Stomach (tissue), 19 donors: ENCODE measurements at regions of chr1 and their contacts with region 1.

Region 1: DNA sequence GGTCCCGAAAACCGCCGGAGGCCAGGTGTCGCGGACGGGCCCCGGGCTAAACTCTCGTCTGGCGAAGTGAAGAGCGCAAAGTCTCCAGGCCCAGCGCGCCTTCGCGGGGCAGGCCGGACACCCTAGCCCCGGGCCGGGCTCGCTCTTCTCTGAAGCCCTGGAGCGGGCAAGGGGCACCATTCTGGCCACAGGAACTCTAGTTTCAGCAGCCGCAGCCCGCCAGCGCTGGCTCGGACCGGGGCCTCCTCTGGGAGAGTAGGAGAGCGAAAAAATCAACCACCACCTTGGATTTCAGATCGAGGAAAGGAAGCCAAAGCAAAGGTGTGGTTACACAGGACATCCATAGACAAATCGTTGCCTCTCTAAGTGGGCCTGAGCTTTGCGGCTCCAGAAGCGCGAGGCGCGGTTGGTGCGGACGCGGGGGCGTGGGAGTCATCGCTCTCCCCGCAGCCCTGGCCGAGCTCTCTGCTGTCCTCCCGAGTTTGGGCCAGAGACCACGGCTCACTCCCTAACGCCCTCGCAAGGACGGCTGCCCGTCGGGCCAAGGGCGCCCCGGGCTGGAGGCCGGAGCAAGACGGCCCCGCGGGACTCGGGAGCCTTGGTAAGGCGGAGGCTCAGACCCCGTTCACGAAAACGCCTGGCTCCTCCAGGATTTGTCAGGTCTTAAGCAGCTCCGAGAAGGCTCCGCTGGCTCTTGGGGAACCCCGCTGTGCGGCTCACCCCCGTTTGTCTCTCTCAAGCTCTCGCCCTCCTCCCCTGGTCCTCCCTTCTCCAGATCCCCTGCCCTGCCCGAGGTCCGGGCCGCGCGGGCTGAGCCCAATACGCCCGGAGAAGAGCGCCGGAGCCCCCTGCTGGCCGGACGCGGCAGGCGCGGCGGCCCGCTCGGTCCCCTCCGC is 132.9 kb upstream of the DPYD start:
- DNase-seq: peak; percentile 55 to 88
- H3K4me3 ChIP-seq: peak overlapping the region; percentile 41 to 68 (median 55)
- H3K27ac ChIP-seq: no peak overlapping the region
- H3K4me1 ChIP-seq: peaks cover 8 to 22% (median 17%) of the 10 kb centered on the region in 4 donors
- H3K27me3 ChIP-seq: peaks cover 7 to 80% (median 29%) of the 10 kb centered on the region in 3 donors
- CTCF ChIP-seq: peak in 5 of 7 experiments; percentile 25 to 93 (median 90)
- EP300 ChIP-seq: no peak
- POLR2A ChIP-seq: no peak

Region 2: GRCh38 chr1:96966536-96967138 is 1087.1 kb before region 1 on chr1:
- intact Hi-C with region 1: loop called (anchors 10 kb)
- DNase-seq: peak; percentile 78 to 89
- H3K4me3 ChIP-seq: no peak overlapping the region
- H3K27ac ChIP-seq: no peak overlapping the region
- H3K4me1 ChIP-seq: peaks cover 0 to 16% (median 8%) of the 10 kb centered on the region in 4 donors
- H3K27me3 ChIP-seq: no peaks in the 10 kb centered on the region
- CTCF ChIP-seq: peak in 5 of 7 experiments; percentile 66 to 91 (median 89)
- EP300 ChIP-seq: no peak
- POLR2A ChIP-seq: no peak